ENCODE measurements at regions of chr14 and their contacts with region 1.

Region 1: GRCh38 chr14:50667996-50668825 is at the start of gene SAV1:
- DNase-seq: peak; percentile 87
- ATAC-seq: peak; percentile 86
- H3K4me3 ChIP-seq: peak within 1 kb of the TSS; percentile 90
- H3K27ac ChIP-seq: peak within 1 kb of the TSS; percentile 98
- H3K4me1 ChIP-seq: peaks cover 13% of the 10 kb centered on the region
- H3K27me3 ChIP-seq: no peaks in the 10 kb centered on the region
- CTCF ChIP-seq: no peak
- POLR2A ChIP-seq: peak; percentile 98
- RAD21 ChIP-seq: no peak
- total RNA-seq, gene SAV1: 18.8 and 25.0 TPM in 2 replicates

Region 2: DNA sequence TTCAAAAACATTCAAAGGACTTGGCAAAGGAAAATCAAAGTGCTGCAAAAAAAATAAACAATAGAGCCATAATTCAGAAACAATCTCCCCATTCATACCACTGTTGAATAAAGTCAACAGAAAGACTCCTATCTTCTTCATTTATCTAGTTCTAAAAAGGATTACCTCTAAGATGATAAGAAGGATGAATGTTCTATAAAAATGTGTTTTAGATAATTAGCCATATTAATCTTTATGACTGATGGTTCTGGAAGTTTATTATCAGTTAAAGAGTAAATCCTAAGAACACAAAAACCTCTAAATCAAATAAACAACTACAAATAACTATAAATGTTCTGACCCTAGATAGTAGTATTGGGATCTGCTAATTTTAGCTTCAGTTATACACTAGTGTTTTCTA is 233.7 kb before region 1 on chr14:
- CTCF ChIA-PET with region 1: no interaction called
- POLR2A ChIA-PET with region 1: no interaction called
- dilution Hi-C with region 1: no loop called
- in situ Hi-C with region 1: no loop called
- intact Hi-C with region 1: no loop called
- DNase-seq: no peak
- ATAC-seq: no peak
- H3K4me3 ChIP-seq: no peak overlapping the region
- H3K27ac ChIP-seq: no peak overlapping the region
- H3K4me1 ChIP-seq: no peaks in the 10 kb centered on the region
- H3K27me3 ChIP-seq: no peaks in the 10 kb centered on the region
- CTCF ChIP-seq: no peak
- POLR2A ChIP-seq: no peak
- RAD21 ChIP-seq: no peak

Region 3: DNA sequence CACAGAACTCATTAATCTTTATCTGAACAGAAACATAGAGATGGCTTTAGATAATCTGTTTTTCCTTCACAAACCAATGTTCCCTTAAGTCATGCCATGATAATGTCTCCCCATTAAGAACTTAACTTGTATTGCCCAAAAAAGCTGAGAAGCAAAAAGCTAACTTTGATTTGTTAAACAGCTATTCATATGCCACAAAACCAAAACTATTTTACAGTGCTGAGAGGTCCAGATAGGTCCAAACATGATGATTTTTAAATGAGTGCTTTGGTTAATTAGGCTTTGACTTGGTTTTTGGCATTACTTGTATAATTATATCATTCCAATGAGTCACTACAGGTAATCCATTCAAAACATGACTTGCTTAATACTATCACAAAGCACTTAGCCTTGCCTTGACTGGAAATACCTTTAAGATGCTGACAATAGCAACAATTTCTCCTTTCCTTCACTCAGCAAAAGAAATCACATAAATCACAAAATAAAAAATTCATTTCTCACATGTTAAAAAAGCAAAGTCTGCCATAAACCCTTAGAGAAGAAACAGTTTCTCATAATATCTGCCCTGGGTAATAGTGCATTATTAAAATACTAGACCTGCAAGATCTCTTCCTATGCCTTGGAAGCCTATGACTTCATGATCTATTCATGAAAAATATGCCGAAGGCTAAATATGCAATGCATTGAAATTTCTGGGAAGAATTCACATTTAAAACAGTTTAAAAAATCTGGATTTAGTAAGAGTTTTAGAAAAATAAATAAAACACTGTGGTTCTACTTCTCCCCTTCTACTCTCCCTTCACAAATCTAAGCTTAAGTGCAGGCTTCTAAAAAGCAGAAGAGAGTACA is 51.9 kb after region 1 on chr14:
- CTCF ChIA-PET with region 1: no interaction called
- POLR2A ChIA-PET with region 1: interaction called, 8 read pairs
- dilution Hi-C with region 1: no loop called
- in situ Hi-C with region 1: no loop called
- intact Hi-C with region 1: loop called (anchors 5 kb)
- DNase-seq: peak; percentile 73
- ATAC-seq: peak; percentile 95
- H3K4me3 ChIP-seq: no peak overlapping the region
- H3K27ac ChIP-seq: peak overlapping the region; percentile 80; the same call in 1 of the 2 replicates
- H3K4me1 ChIP-seq: peaks cover 9% of the 10 kb centered on the region
- H3K27me3 ChIP-seq: no peaks in the 10 kb centered on the region
- CTCF ChIP-seq: no peak
- POLR2A ChIP-seq: no peak
- RAD21 ChIP-seq: no peak

Region 4: GRCh38 chr14:50736932-50737419 is 68.8 kb after region 1 on chr14:
- CTCF ChIA-PET with region 1: no interaction called
- POLR2A ChIA-PET with region 1: no interaction called
- dilution Hi-C with region 1: no loop called
- in situ Hi-C with region 1: no loop called
- intact Hi-C with region 1: loop called (anchors 5 kb)
- DNase-seq: no peak
- ATAC-seq: no peak
- H3K4me3 ChIP-seq: no peak overlapping the region
- H3K27ac ChIP-seq: no peak overlapping the region
- H3K4me1 ChIP-seq: no peaks in the 10 kb centered on the region; the same call in 1 of the 2 replicates
- H3K27me3 ChIP-seq: no peaks in the 10 kb centered on the region
- CTCF ChIP-seq: no peak
- POLR2A ChIP-seq: no peak
- RAD21 ChIP-seq: no peak

Region 5: DNA sequence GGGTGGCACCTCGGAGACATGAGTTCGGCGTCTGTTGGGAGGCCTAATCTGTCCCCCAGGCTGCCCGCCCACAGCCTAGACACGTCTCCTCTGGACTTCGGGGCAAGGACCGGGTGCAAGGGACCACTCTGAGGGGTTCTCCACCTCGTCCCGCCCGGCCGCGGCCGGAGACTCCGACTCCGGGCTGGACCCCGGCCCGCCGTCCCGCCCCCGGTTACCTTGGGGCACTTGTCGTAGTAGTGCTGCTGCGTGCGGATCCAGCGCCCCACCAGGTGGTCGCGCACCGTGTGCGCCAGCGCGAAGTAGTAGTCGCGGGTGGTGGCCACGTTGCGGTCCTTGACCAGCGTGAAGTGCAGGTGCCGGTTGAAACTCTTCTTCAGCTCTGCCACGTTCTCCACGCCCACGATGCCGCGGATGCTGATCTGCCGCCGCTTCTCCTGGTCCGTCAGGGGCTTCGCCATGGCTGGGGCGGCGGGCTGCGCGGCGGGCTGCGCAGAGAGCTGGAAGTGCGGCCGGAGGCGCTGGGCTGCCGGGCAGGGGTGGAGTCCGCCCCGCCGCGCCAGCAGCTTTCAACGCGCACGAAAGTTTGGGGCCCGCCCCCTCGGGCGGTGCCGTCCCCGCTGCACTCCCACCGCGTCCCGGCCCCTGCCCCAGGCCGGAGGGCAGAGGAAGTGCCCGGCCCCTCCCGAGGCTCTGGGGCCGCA is 275.9 kb after region 1 on chr14 and contains the start of gene PYGL:
- CTCF ChIA-PET with region 1: no interaction called
- POLR2A ChIA-PET with region 1: no interaction called
- dilution Hi-C with region 1: no loop called
- in situ Hi-C with region 1: no loop called
- intact Hi-C with region 1: loop called (anchors 2 kb)
- DNase-seq: peak; percentile 49
- ATAC-seq: peak; percentile 91
- H3K4me3 ChIP-seq: peak within 1 kb of the TSS; percentile 96
- H3K27ac ChIP-seq: peak within 1 kb of the TSS; percentile 47
- H3K4me1 ChIP-seq: peaks cover 9% of the 10 kb centered on the region; the same call in 1 of the 2 replicates
- H3K27me3 ChIP-seq: no peaks in the 10 kb centered on the region
- CTCF ChIP-seq: no peak
- POLR2A ChIP-seq: peak; percentile 49
- RAD21 ChIP-seq: no peak
- total RNA-seq, gene PYGL: 70.4 and 73.0 TPM in 2 replicates

Region 6: DNA sequence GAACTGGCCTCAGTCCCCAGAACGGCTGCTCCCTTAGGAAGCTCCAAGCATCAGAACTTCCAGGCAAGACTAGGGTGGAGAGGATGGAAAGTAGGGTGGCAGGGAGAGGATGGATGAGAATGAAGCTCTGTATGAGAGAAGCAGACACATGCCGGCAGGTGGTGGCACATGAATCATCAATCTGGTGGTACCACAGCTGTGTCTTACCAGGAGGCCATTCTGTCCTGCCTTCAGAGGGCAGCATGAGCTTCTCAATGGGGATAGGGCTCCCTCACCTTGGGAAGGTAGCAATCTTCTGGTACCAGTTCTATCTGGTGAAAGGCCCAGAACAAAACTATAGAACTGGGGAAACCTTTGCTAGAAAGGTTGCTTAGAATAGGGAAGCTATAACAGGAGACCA is 331.5 kb after region 1 on chr14:
- CTCF ChIA-PET with region 1: no interaction called
- POLR2A ChIA-PET with region 1: no interaction called
- dilution Hi-C with region 1: no loop called
- in situ Hi-C with region 1: no loop called
- intact Hi-C with region 1: no loop called
- DNase-seq: no peak
- ATAC-seq: no peak
- H3K4me3 ChIP-seq: no peak overlapping the region
- H3K27ac ChIP-seq: no peak overlapping the region
- H3K4me1 ChIP-seq: no peaks in the 10 kb centered on the region
- H3K27me3 ChIP-seq: peaks cover 11% of the 10 kb centered on the region
- CTCF ChIP-seq: no peak
- POLR2A ChIP-seq: no peak
- RAD21 ChIP-seq: no peak

Measured in IMR-90 (cell line).